IMR-90 (cell line): ENCODE measurements at regions of chr1 and their contacts with region 1.

Region 1: GRCh38 chr1:98749152-98749756 is 87.7 kb downstream of the SNX7 start:
- DNase-seq: peak; percentile 7
- ATAC-seq: no peak; the same call in 1 of the 2 replicates
- H3K4me3 ChIP-seq: no peak overlapping the region
- H3K27ac ChIP-seq: no peak overlapping the region
- H3K4me1 ChIP-seq: no peaks in the 10 kb centered on the region
- H3K27me3 ChIP-seq: no peaks in the 10 kb centered on the region
- CTCF ChIP-seq: peak; percentile 48
- POLR2A ChIP-seq: no peak
- RAD21 ChIP-seq: peak; percentile 39; the same call in 1 of the 2 replicates

Region 2: GRCh38 chr1:98556521-98557158 is 192.6 kb before region 1 on chr1:
- CTCF ChIA-PET with region 1: no interaction called
- POLR2A ChIA-PET with region 1: no interaction called
- dilution Hi-C with region 1: no loop called
- in situ Hi-C with region 1: no loop called
- intact Hi-C with region 1: no loop called
- DNase-seq: peak; percentile 22
- ATAC-seq: no peak
- H3K4me3 ChIP-seq: no peak overlapping the region
- H3K27ac ChIP-seq: no peak overlapping the region
- H3K4me1 ChIP-seq: no peaks in the 10 kb centered on the region
- H3K27me3 ChIP-seq: peaks cover 1% of the 10 kb centered on the region; the same call in 1 of the 2 replicates
- CTCF ChIP-seq: peak; percentile 45
- POLR2A ChIP-seq: no peak
- RAD21 ChIP-seq: no peak

Region 3: DNA sequence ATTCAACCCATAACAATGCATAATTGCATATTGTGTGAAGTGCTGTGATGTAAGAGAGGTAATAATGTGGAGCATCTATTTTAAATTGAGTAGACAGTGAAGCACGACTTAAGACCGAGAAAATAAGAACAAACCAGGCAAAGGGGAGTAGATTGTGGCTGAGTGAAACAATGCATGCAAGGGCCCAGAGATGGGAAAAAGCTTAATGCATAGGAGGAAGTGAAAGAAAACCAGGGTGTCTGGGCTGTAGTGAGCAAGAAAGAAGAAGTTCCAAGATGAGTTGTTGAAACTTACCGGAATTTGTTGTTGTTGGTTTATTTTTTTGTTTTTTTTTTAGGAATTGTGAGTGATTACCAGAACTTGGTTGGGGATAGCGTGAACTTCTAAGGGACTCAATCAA is 17.0 kb after region 1 on chr1:
- CTCF ChIA-PET with region 1: interaction called, 11 read pairs
- POLR2A ChIA-PET with region 1: no interaction called
- dilution Hi-C with region 1: no loop called
- in situ Hi-C with region 1: no loop called
- intact Hi-C with region 1: no loop called
- DNase-seq: no peak
- ATAC-seq: no peak
- H3K4me3 ChIP-seq: no peak overlapping the region
- H3K27ac ChIP-seq: no peak overlapping the region
- H3K4me1 ChIP-seq: no peaks in the 10 kb centered on the region
- H3K27me3 ChIP-seq: no peaks in the 10 kb centered on the region
- CTCF ChIP-seq: no peak
- POLR2A ChIP-seq: no peak
- RAD21 ChIP-seq: no peak

Region 4: DNA sequence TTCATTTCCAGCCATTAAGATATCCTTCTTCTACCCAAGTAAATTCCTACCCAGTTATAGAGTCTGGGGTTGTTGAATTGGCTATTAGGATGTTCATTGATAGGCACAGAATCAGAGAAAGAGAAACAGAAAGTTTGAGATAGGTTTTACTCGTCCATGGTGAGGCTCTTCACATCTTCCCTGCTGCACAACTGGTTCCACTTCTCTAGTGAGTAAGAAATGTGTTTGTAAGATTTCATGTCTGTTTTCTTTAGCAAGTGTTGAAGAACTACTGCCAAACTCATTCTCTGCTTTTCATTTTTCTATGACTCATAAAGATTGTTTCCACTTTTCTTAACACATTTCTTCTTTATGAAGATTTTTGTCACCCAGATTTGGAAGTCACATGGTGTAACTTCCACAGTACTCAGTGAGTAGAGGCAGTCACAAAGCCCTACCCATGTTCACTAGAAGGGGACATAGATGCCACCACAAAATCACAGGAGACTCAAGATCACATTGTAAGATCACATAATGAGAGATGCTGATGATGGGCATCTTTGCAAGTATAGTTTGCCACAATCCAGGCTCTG is 64.6 kb after region 1 on chr1:
- CTCF ChIA-PET with region 1: no interaction called
- POLR2A ChIA-PET with region 1: no interaction called
- dilution Hi-C with region 1: no loop called
- in situ Hi-C with region 1: no loop called
- intact Hi-C with region 1: no loop called
- DNase-seq: no peak
- ATAC-seq: no peak
- H3K4me3 ChIP-seq: no peak overlapping the region
- H3K27ac ChIP-seq: no peak overlapping the region
- H3K4me1 ChIP-seq: no peaks in the 10 kb centered on the region
- H3K27me3 ChIP-seq: no peaks in the 10 kb centered on the region
- CTCF ChIP-seq: no peak
- POLR2A ChIP-seq: no peak
- RAD21 ChIP-seq: no peak

Region 5: DNA sequence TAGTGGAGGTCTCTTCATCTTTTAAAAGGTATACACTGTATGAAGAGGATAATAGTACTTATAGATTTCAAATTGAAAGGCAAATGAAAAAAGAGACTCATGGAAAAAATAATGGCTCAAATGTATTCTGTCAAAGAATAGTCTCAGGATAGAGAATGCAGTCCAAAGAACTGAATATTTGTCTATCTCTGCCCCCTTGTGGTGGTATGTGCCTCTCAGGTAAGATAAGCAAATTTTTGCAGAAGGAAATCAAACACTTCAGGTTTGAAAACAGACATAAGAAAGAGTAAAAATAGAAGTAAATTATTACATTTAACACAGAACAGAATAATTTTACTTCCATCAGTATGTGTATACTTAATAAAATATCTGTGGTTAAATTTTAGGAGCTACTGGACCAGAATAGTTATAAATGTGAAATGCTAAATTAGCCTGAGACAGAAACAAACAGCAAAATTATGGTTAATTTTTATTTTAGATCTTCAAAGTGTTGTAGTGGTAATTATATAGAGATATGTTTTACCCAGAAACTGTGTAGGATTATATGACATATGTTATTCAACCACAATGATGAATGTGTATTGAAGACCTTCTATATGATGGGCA is 732.2 kb after region 1 on chr1:
- CTCF ChIA-PET with region 1: no interaction called
- POLR2A ChIA-PET with region 1: no interaction called
- dilution Hi-C with region 1: no loop called
- in situ Hi-C with region 1: no loop called
- intact Hi-C with region 1: loop called (anchors 2 kb)
- DNase-seq: peak; percentile 68
- ATAC-seq: peak; percentile 71; the same call in 1 of the 2 replicates
- H3K4me3 ChIP-seq: no peak overlapping the region
- H3K27ac ChIP-seq: no peak overlapping the region
- H3K4me1 ChIP-seq: no peaks in the 10 kb centered on the region
- H3K27me3 ChIP-seq: no peaks in the 10 kb centered on the region
- CTCF ChIP-seq: peak; percentile 83
- POLR2A ChIP-seq: no peak
- RAD21 ChIP-seq: peak; percentile 88

Region 6: DNA sequence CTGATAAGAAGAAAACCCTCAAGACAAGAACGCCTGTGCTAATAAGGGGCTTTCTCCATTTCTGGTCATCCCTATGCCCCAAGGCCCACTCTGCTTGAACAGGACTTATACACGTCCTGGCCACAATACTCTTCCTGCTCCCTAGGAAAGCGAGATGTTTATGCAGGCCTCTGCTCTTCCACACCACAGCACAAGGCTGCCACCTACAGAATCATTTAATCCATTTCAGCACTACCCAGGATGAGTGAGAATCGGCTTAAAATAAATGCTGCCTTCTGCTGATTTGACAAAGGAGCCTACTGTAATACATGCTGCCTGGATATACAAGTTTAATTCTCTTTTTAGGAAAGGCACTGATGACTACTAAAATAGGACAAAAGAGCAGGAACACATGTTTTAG is 987.8 kb after region 1 on chr1:
- CTCF ChIA-PET with region 1: no interaction called
- POLR2A ChIA-PET with region 1: no interaction called
- dilution Hi-C with region 1: no loop called
- in situ Hi-C with region 1: no loop called
- intact Hi-C with region 1: loop called (anchors 10 kb)
- DNase-seq: peak; percentile 77
- ATAC-seq: peak; percentile 100
- H3K4me3 ChIP-seq: no peak overlapping the region
- H3K27ac ChIP-seq: no peak overlapping the region
- H3K4me1 ChIP-seq: no peaks in the 10 kb centered on the region
- H3K27me3 ChIP-seq: no peaks in the 10 kb centered on the region
- CTCF ChIP-seq: peak; percentile 72
- POLR2A ChIP-seq: no peak
- RAD21 ChIP-seq: peak; percentile 81